Endothelial cell of umbilical vein (primary cell): ENCODE measurements at regions of chr11 and their contacts with region 1.

Region 1: GRCh38 chr11:10933455-10934292 is 75.8 kb upstream of the ZBED5 start:
- DNase-seq: peak; percentile 94
- H3K4me3 ChIP-seq: peak overlapping the region; percentile 14 to 73 (median 20)
- H3K27ac ChIP-seq: no peak overlapping the region
- H3K4me1 ChIP-seq: peaks cover 12% of the 10 kb centered on the region
- H3K27me3 ChIP-seq: peaks cover 0 to 12% of the 10 kb centered on the region in 2 experiments
- CTCF ChIP-seq: peak; percentile 85 to 92
- POLR2A ChIP-seq: no peak

Region 2: GRCh38 chr11:10762185-10762584 is 171.5 kb before region 1 on chr11:
- CTCF ChIA-PET with region 1: no interaction called
- POLR2A ChIA-PET with region 1: no interaction called
- dilution Hi-C with region 1: no loop called
- intact Hi-C with region 1: no loop called
- DNase-seq: no peak
- H3K4me3 ChIP-seq: no peak overlapping the region
- H3K27ac ChIP-seq: no peak overlapping the region
- H3K4me1 ChIP-seq: peaks cover 4% of the 10 kb centered on the region
- H3K27me3 ChIP-seq: no peaks in the 10 kb centered on the region
- CTCF ChIP-seq: no peak
- POLR2A ChIP-seq: no peak

Region 3: GRCh38 chr11:10857709-10858438 is 75.8 kb before region 1 on chr11 and contains the start of gene ZBED5:
- CTCF ChIA-PET with region 1: interaction called, 14 read pairs
- POLR2A ChIA-PET with region 1: interaction called, 6 read pairs
- dilution Hi-C with region 1: no loop called
- intact Hi-C with region 1: loop called (anchors 1 kb)
- DNase-seq: peak; percentile 99
- H3K4me3 ChIP-seq: peak within 1 kb of the TSS; percentile 63 to 100 (median 94)
- H3K27ac ChIP-seq: peak within 1 kb of the TSS; percentile 80
- H3K4me1 ChIP-seq: peaks cover 8% of the 10 kb centered on the region
- H3K27me3 ChIP-seq: no peaks in the 10 kb centered on the region
- CTCF ChIP-seq: peak in 1 of 2 donors; percentile 4
- POLR2A ChIP-seq: peak; percentile 96
- total RNA-seq, gene ZBED5: 35.7 and 41.2 TPM in 2 replicates

Region 4: DNA sequence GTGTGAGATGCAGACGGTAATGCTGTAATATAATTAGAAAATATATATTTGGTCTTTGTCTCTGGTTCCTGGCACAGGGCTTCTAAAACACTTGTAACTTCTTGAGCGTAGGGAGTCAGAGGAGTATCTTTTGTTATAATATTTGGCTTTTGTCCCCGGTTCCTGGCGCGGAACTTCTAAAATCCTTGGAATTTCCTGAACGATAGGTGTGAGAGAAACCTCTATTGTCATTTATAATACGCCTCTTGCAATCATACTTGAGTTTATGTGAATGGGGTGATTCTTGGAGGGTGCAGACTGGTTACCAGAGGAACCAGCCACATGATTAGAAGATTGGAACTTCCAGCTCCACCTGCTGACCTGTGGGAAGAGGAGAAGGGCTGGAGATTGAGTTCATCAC is 21.8 kb before region 1 on chr11:
- CTCF ChIA-PET with region 1: interaction called, 9 read pairs
- POLR2A ChIA-PET with region 1: interaction called, 12 read pairs
- dilution Hi-C with region 1: no loop called
- intact Hi-C with region 1: loop called (anchors 2 kb)
- DNase-seq: peak; percentile 34
- H3K4me3 ChIP-seq: no peak overlapping the region
- H3K27ac ChIP-seq: no peak overlapping the region
- H3K4me1 ChIP-seq: peaks cover 17% of the 10 kb centered on the region
- H3K27me3 ChIP-seq: no peaks in the 10 kb centered on the region
- CTCF ChIP-seq: no peak
- POLR2A ChIP-seq: no peak

Region 5: GRCh38 chr11:11016068-11016467 is 82.4 kb after region 1 on chr11:
- CTCF ChIA-PET with region 1: interaction called, 75 read pairs
- POLR2A ChIA-PET with region 1: no interaction called
- dilution Hi-C with region 1: no loop called
- intact Hi-C with region 1: no loop called
- DNase-seq: no peak
- H3K4me3 ChIP-seq: no peak overlapping the region
- H3K27ac ChIP-seq: no peak overlapping the region
- H3K4me1 ChIP-seq: no peaks in the 10 kb centered on the region
- H3K27me3 ChIP-seq: peaks cover 10 to 24% of the 10 kb centered on the region in 2 experiments
- CTCF ChIP-seq: no peak
- POLR2A ChIP-seq: no peak

Region 6: DNA sequence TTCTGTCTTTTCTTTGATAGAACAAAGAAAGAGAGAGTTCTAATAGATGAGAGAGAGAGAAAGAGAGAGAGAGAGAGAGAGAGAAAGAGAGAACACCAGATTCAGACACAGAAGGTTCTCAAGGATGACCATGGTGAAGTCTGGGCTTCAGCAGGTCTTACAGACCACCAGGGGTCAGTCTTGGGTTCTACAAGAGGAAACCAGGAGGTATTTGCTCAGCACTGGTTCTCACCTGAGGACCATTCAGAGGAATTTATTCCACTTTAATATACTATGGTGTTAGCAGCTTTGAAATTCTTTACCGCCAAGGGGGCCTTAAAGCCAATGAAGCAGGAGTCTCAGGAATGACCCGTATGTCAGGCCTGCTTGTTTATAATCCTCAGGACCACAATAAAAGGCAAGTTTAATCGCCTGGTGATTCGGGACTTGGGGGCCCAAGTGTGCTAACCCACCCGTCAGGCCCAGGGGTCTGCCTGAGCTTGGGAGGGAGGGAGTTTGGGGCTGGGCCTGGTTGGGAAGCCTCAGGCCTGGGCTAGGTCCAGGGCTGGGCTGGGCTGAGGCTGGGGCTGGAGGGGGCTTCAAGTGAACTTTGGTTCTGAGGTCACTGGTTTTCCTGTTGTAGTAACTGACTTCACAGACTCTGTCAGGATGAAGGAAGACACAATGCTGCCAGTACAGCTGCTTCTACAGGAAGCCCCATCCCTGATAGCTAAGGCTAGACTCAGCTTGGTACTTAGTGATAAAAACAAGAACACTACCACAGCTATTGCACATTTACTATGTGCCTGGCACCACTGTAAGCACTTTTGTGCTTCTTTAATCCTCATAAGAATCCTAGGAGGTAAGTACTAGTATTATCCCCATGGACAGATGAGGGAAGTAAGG is 103.4 kb after region 1 on chr11:
- CTCF ChIA-PET with region 1: interaction called, 10 read pairs
- POLR2A ChIA-PET with region 1: no interaction called
- dilution Hi-C with region 1: no loop called
- intact Hi-C with region 1: no loop called
- DNase-seq: peak; percentile 16
- H3K4me3 ChIP-seq: no peak overlapping the region
- H3K27ac ChIP-seq: no peak overlapping the region
- H3K4me1 ChIP-seq: no peaks in the 10 kb centered on the region
- H3K27me3 ChIP-seq: peaks cover 0 to 13% of the 10 kb centered on the region in 2 experiments
- CTCF ChIP-seq: peak; percentile 34 to 59
- POLR2A ChIP-seq: no peak

Region 7: DNA sequence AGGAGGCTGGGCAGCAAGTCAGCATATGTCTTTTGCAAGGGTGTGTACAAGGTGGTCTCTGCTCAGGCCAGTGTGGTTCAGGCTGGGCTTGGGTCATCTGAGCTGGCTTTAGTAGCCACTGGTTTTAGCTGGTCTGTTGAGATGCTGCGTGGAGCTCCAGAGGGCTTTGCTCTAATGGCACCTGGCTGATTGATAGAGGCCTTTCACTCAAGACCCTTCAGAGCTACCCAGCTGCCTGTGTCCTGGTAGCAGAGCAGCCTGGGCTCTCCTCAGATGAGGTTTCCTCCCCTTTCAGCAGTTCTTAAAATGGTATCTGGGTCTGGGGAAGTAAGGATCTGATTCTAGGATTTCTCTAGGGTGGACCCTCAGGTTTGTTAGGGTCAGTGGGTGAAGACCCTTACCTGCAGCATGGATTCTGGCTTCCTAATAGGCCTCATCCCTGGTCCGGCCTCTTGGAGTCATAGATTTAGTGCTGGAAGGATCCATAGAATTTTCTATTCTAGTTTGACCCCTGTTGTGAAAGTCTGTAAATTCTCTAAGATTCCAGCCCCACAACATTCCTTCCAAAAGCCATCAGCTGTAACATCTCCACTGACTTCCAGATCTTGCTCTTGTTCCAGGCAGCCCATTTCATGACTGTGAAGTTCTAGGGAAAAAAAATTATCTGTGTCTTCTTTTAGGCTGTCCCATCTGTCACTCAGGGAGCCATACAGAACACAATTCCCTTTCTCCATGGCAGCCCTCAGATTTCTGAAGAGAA is 114.4 kb after region 1 on chr11:
- CTCF ChIA-PET with region 1: no interaction called
- POLR2A ChIA-PET with region 1: no interaction called
- dilution Hi-C with region 1: no loop called
- intact Hi-C with region 1: no loop called
- DNase-seq: no peak
- H3K4me3 ChIP-seq: no peak overlapping the region
- H3K27ac ChIP-seq: no peak overlapping the region
- H3K4me1 ChIP-seq: no peaks in the 10 kb centered on the region
- H3K27me3 ChIP-seq: no peaks in the 10 kb centered on the region
- CTCF ChIP-seq: no peak
- POLR2A ChIP-seq: no peak

Region 8: DNA sequence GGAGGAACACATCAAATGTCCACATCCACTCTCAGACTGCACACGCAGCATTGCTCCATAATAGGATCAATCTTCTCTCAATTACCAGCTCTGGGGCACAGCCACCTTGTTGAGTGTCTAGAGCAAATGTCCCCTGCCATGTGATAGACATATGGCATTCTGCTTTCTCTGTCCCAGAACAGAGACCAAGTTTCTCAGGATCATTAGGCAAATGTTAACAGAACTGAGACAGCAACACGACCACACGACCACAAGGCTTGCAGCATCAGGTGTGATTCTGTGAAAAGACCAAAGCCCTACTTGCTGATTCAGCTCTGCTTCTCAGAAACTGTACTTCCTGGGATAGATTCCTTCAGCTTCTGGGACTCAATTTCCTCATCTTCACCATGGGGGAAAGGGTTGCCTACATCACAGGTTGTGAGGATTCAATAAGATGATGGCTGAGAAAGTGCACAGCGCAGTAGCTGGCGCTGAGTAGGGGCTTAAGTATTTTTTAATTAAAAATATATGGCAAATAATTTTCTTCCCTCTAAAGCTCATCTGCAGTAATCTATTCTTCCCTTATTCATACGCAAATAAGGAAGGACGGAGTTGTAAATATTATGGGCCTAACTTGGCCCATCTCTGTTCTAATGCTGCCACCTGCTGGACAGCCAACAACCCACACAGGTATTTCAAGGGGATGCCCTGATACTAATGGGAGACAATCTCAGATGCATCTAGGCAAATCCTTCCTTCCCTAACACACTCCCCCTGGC is 853.8 kb after region 1 on chr11:
- CTCF ChIA-PET with region 1: interaction called, 57 read pairs
- POLR2A ChIA-PET with region 1: no interaction called
- dilution Hi-C with region 1: no loop called
- intact Hi-C with region 1: loop called (anchors 1 kb)
- DNase-seq: peak; percentile 66
- H3K4me3 ChIP-seq: no peak overlapping the region
- H3K27ac ChIP-seq: no peak overlapping the region
- H3K4me1 ChIP-seq: no peaks in the 10 kb centered on the region
- H3K27me3 ChIP-seq: peaks cover 0 to 5% of the 10 kb centered on the region in 2 experiments
- CTCF ChIP-seq: peak; percentile 69 to 73
- POLR2A ChIP-seq: no peak

Region 9: GRCh38 chr11:12087075-12088004 is 1153.7 kb after region 1 on chr11:
- CTCF ChIA-PET with region 1: no interaction called
- POLR2A ChIA-PET with region 1: no interaction called
- dilution Hi-C with region 1: no loop called
- intact Hi-C with region 1: no loop called
- DNase-seq: peak; percentile 50
- H3K4me3 ChIP-seq: peak overlapping the region in 1 of 3 experiments; percentile 54
- H3K27ac ChIP-seq: peak overlapping the region; percentile 99
- H3K4me1 ChIP-seq: peaks cover 76% of the 10 kb centered on the region
- H3K27me3 ChIP-seq: no peaks in the 10 kb centered on the region
- CTCF ChIP-seq: peak; percentile 14 to 35
- POLR2A ChIP-seq: peak; percentile 50